ENCODE measurements at regions of chr4 and their contacts with region 1.

Region 1: DNA sequence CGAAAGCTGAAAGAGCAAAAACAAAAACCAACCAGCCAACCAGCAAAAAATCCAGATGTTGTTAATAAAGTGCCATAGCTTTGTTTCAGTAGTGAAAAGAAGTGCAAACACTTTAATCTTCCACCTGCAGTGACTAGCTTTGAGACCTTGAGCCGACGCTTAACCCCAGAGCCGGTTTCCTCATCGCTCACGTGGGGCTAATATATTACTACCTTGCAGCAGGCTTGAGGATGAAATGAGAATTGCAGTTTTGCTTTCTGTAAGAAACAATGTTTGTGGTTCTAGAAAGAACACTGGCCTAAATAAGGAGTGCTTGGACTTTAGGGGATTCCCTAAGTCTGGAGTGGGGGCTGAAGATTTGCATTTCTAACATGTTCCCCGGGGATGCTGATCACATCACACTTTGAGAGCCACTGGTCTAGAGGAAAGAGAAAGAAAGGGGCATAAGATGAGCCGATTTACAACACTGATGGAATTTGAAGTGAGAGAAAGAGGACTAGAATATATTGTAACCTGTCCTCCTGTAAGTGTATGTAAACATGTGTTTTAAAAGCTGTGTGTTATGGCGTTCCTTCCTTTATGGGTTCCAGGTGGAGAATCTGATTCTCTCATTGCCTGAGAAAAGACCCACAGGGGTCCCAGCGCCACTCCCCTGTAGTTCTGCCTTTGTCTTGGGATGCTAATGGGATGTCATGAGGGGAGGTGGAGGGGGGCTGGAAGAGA is 1.4 kb downstream of the FGF2 start:
- DNase-seq: peak; percentile 77
- ATAC-seq: peak; percentile 4; the same call in 1 of the 2 replicates
- H3K4me3 ChIP-seq: peak overlapping the region; percentile 99
- H3K27ac ChIP-seq: peak overlapping the region; percentile 96
- H3K4me1 ChIP-seq: peaks cover 19% of the 10 kb centered on the region
- H3K27me3 ChIP-seq: no peaks in the 10 kb centered on the region
- CTCF ChIP-seq: peak; percentile 30; the same call in 1 of the 2 replicates
- POLR2A ChIP-seq: no peak
- RAD21 ChIP-seq: no peak; the same call in 1 of the 2 replicates

Region 2: DNA sequence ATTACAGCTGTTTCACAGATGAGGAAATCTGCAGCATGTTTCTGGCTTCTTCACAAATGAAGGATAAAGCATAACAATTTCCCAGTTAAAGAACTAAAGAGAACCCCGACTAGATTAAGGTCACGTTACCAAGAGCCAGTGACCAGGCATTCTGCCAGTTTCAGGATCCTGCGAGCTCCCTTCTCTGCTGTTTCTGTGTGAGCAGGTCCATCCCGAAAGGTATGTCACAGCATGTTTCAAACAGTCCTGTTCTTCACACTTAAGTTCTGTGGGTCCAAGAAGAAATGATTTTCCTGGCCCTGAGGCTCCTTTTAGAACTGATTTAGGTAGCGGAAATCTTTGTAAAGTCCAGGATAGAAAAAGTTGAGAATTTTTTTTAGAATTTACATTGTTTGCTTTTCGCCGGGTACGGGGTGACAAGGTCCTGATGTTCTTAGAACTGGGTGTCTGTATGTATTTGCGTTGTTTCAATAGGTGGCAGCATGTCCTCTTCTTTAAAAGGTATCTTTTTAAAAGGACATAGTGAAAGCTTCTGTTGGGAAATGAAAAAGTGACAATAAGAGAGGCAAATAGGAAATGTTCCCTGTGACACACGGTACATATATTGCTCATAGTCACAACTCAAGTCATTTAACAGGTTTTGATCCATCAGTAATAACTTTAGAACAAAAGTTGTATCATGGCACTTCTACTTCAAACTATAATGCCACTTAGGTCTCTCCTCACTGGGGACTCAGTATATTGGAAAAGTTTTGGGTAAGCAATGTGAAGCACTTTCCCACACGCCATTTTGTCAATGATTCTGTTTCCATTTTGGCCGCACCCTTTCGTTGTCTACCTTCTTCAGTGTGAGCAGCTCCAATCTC is 225.5 kb before region 1 on chr4:
- CTCF ChIA-PET with region 1: no interaction called
- POLR2A ChIA-PET with region 1: no interaction called
- dilution Hi-C with region 1: no loop called
- in situ Hi-C with region 1: no loop called
- intact Hi-C with region 1: loop called (anchors 10 kb)
- DNase-seq: peak; percentile 54
- ATAC-seq: peak; percentile 89
- H3K4me3 ChIP-seq: no peak overlapping the region
- H3K27ac ChIP-seq: no peak overlapping the region
- H3K4me1 ChIP-seq: no peaks in the 10 kb centered on the region
- H3K27me3 ChIP-seq: peaks cover 2% of the 10 kb centered on the region; the same call in 1 of the 2 replicates
- CTCF ChIP-seq: peak; percentile 54
- POLR2A ChIP-seq: no peak
- RAD21 ChIP-seq: peak; percentile 62

Region 3: GRCh38 chr4:122747883-122748282 is 80.2 kb before region 1 on chr4:
- CTCF ChIA-PET with region 1: no interaction called
- POLR2A ChIA-PET with region 1: no interaction called
- dilution Hi-C with region 1: no loop called
- in situ Hi-C with region 1: no loop called
- intact Hi-C with region 1: no loop called
- DNase-seq: peak; percentile 91
- ATAC-seq: peak; percentile 90
- H3K4me3 ChIP-seq: no peak overlapping the region
- H3K27ac ChIP-seq: no peak overlapping the region
- H3K4me1 ChIP-seq: peaks cover 3% of the 10 kb centered on the region; the same call in 1 of the 2 replicates
- H3K27me3 ChIP-seq: no peaks in the 10 kb centered on the region
- CTCF ChIP-seq: no peak
- POLR2A ChIP-seq: no peak
- RAD21 ChIP-seq: no peak

Region 4: DNA sequence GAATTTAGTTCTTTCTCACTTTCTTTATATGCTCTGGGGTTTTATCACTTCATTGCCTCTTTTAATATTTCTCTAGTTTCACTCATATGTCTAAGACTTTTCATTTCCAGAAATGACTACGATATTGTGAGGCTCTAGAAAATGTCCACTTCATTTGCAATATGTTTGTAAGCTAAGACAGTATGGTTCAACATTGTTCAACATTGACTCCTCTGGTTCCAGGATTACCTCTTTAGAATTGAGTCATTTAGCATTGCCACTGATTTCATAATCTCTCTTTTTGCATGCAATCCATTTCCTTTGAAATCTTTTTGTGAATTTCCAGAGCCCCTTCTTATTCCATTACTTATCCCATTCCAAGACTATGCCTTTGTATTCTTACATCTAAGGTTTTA is 63.2 kb before region 1 on chr4:
- CTCF ChIA-PET with region 1: interaction called, 7 read pairs
- POLR2A ChIA-PET with region 1: no interaction called
- dilution Hi-C with region 1: no loop called
- in situ Hi-C with region 1: no loop called
- intact Hi-C with region 1: loop called (anchors 2 kb)
- DNase-seq: peak; percentile 92
- ATAC-seq: peak; percentile 57
- H3K4me3 ChIP-seq: no peak overlapping the region
- H3K27ac ChIP-seq: peak overlapping the region; percentile 55; the same call in 1 of the 2 replicates
- H3K4me1 ChIP-seq: peaks cover 4% of the 10 kb centered on the region; the same call in 1 of the 2 replicates
- H3K27me3 ChIP-seq: no peaks in the 10 kb centered on the region
- CTCF ChIP-seq: no peak
- POLR2A ChIP-seq: peak; percentile 33; the same call in 1 of the 2 replicates
- RAD21 ChIP-seq: peak; percentile 15; the same call in 1 of the 2 replicates

Region 5: DNA sequence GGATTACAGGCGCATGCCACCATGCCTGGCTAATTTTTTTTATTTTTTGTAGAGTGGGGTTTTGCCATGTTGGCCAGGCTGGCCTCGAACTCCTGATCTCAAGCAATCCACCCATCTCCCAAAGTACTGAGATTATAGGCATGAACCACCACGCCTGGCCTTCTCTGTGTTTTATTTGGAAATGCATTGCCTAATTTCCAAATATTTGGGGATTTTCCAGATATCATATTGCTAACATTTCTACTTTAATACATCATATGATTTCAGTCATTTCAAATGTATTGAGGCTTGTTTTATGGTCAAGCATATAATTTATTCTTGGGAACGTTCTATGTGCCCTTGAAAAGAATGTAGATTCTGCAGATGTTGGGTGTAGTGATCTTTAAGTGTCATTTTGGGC is 37.4 kb after region 1 on chr4:
- CTCF ChIA-PET with region 1: no interaction called
- POLR2A ChIA-PET with region 1: no interaction called
- dilution Hi-C with region 1: no loop called
- in situ Hi-C with region 1: no loop called
- intact Hi-C with region 1: loop called (anchors 5 kb)
- DNase-seq: peak; percentile 35
- ATAC-seq: no peak
- H3K4me3 ChIP-seq: no peak overlapping the region
- H3K27ac ChIP-seq: no peak overlapping the region
- H3K4me1 ChIP-seq: peaks cover 6% of the 10 kb centered on the region
- H3K27me3 ChIP-seq: no peaks in the 10 kb centered on the region
- CTCF ChIP-seq: no peak
- POLR2A ChIP-seq: no peak
- RAD21 ChIP-seq: no peak

Region 6: GRCh38 chr4:122914292-122914904 is 86.4 kb after region 1 on chr4:
- CTCF ChIA-PET with region 1: interaction called, 3 read pairs
- POLR2A ChIA-PET with region 1: no interaction called
- dilution Hi-C with region 1: no loop called
- in situ Hi-C with region 1: no loop called
- intact Hi-C with region 1: loop called (anchors 2 kb)
- DNase-seq: peak; percentile 68
- ATAC-seq: peak; percentile 89
- H3K4me3 ChIP-seq: no peak overlapping the region; the same call in 1 of the 2 replicates
- H3K27ac ChIP-seq: no peak overlapping the region
- H3K4me1 ChIP-seq: peaks cover 9% of the 10 kb centered on the region
- H3K27me3 ChIP-seq: no peaks in the 10 kb centered on the region
- CTCF ChIP-seq: peak; percentile 75
- POLR2A ChIP-seq: no peak
- RAD21 ChIP-seq: peak; percentile 84

Region 7: DNA sequence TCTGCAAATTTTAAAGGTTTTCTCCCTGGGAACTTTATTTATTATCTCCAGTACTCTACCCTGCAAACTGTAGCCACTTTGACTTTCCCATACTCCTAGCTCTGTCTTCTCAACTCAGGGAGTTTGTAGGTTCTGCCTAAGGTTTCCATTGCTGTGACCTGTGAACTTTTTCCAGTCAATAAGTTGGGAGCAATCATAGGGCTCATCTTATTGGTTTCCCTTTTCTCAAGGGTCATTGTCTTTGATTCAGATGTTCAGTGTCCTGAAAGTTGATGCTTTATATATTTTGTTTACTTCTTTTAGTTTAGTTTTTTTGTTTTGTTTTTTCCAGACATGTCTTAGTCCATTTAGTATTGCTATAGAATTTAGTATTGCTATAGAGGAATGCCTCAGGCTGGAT is 179.6 kb after region 1 on chr4:
- CTCF ChIA-PET with region 1: no interaction called
- POLR2A ChIA-PET with region 1: no interaction called
- dilution Hi-C with region 1: no loop called
- in situ Hi-C with region 1: no loop called
- intact Hi-C with region 1: no loop called
- DNase-seq: no peak
- ATAC-seq: no peak
- H3K4me3 ChIP-seq: no peak overlapping the region
- H3K27ac ChIP-seq: no peak overlapping the region
- H3K4me1 ChIP-seq: no peaks in the 10 kb centered on the region
- H3K27me3 ChIP-seq: no peaks in the 10 kb centered on the region
- CTCF ChIP-seq: no peak
- POLR2A ChIP-seq: no peak
- RAD21 ChIP-seq: no peak

Region 8: GRCh38 chr4:123986268-123986798 is 1158.3 kb after region 1 on chr4:
- CTCF ChIA-PET with region 1: no interaction called
- POLR2A ChIA-PET with region 1: no interaction called
- dilution Hi-C with region 1: no loop called
- in situ Hi-C with region 1: no loop called
- intact Hi-C with region 1: no loop called
- DNase-seq: peak; percentile 92
- ATAC-seq: peak; percentile 90
- H3K4me3 ChIP-seq: peak overlapping the region; percentile 8; the same call in 1 of the 2 replicates
- H3K27ac ChIP-seq: peak overlapping the region; percentile 92
- H3K4me1 ChIP-seq: peaks cover 3% of the 10 kb centered on the region
- H3K27me3 ChIP-seq: no peaks in the 10 kb centered on the region
- CTCF ChIP-seq: no peak
- POLR2A ChIP-seq: no peak
- RAD21 ChIP-seq: no peak

Measured in IMR-90 (cell line).